ENCODE measurements at regions of chr1 and their contacts with region 1.

Region 1: GRCh38 chr1:45011837-45012638 is at the start of gene UROD:
- DNase-seq: peak; percentile 96
- H3K4me3 Mint-ChIP-seq: peak within 1 kb of the TSS; percentile 88
- H3K27ac Mint-ChIP-seq: peak within 1 kb of the TSS; percentile 85
- H3K4me1 Mint-ChIP-seq: peaks cover 20% of the 10 kb centered on the region
- H3K27me3 Mint-ChIP-seq: no peaks in the 10 kb centered on the region
- CTCF ChIP-seq: no peak
- total RNA-seq, gene UROD: 76.9 and 84.7 TPM in 2 replicates

Region 2: DNA sequence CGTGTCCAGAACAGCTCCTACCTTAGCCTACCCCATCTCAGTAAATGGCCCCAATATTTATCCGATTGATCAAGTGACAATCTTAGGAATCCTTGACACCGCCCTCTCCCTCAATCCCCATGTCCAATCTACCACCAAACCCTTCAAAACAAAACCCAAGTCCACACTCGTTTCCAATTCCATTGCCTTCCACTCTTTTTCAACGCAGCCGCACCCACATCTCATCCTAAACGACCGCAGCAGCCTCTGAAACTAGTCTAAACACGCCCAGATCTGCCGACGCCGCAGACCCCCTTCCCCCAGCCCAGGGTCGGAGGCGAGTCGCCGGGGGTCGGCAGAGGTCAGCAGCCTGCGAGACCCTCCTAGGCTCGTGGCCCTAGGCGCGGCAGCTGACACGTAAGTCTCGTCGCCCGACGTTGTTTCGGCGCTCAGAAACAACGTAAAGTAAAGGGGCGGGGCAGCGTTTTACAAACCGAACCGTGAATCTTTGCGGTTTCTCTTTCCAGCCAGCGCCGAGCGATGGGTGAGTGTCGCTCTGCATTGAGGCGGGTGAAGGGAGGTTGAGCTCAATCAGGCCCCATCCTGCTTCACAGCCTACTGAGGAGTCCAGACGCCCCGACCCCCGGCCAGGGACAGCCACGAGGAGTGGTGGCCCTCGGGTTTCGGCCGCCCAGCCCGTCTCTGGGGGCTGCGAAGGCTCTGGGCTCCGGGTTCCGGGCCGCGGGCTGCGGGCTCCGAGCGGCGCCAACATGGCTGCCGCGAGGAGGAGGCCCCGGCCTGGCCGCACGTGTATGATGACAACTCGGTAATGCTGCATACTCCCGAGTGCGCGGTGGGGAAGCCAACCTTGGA is 236.7 kb before region 1 on chr1 and contains the start of gene RPS8:
- CTCF ChIA-PET with region 1: interaction called, 3 read pairs
- POLR2A ChIA-PET with region 1: interaction called, 41 read pairs
- intact Hi-C with region 1: no loop called
- DNase-seq: peak; percentile 96
- H3K4me3 Mint-ChIP-seq: peak within 1 kb of the TSS; percentile 91
- H3K27ac Mint-ChIP-seq: peak within 1 kb of the TSS; percentile 99
- H3K4me1 Mint-ChIP-seq: peaks cover 25% of the 10 kb centered on the region
- H3K27me3 Mint-ChIP-seq: no peaks in the 10 kb centered on the region
- CTCF ChIP-seq: no peak
- total RNA-seq, gene RPS8: 2,454 and 2,713 TPM in 2 replicates

Region 3: GRCh38 chr1:44819608-44820327 is 192.3 kb before region 1 on chr1:
- CTCF ChIA-PET with region 1: interaction called, 3 read pairs
- POLR2A ChIA-PET with region 1: interaction called, 20 read pairs
- intact Hi-C with region 1: no loop called
- DNase-seq: peak; percentile 94
- H3K4me3 Mint-ChIP-seq: peak overlapping the region; percentile 74
- H3K27ac Mint-ChIP-seq: peak overlapping the region; percentile 99
- H3K4me1 Mint-ChIP-seq: peaks cover 37% of the 10 kb centered on the region
- H3K27me3 Mint-ChIP-seq: no peaks in the 10 kb centered on the region
- CTCF ChIP-seq: no peak

Region 4: GRCh38 chr1:44970317-44970716 is 41.7 kb before region 1 on chr1:
- CTCF ChIA-PET with region 1: no interaction called
- POLR2A ChIA-PET with region 1: no interaction called
- intact Hi-C with region 1: no loop called
- DNase-seq: no peak
- H3K4me3 Mint-ChIP-seq: no peak overlapping the region
- H3K27ac Mint-ChIP-seq: no peak overlapping the region
- H3K4me1 Mint-ChIP-seq: no peaks in the 10 kb centered on the region
- H3K27me3 Mint-ChIP-seq: no peaks in the 10 kb centered on the region
- CTCF ChIP-seq: no peak

Region 5: GRCh38 chr1:44985747-44986359 is 26.2 kb before region 1 on chr1:
- CTCF ChIA-PET with region 1: interaction called, 10 read pairs
- POLR2A ChIA-PET with region 1: interaction called, 56 read pairs
- intact Hi-C with region 1: no loop called
- DNase-seq: peak; percentile 8
- H3K4me3 Mint-ChIP-seq: peak overlapping the region; percentile 90
- H3K27ac Mint-ChIP-seq: peak overlapping the region; percentile 40
- H3K4me1 Mint-ChIP-seq: peaks cover 5% of the 10 kb centered on the region
- H3K27me3 Mint-ChIP-seq: no peaks in the 10 kb centered on the region
- CTCF ChIP-seq: no peak

Region 6: GRCh38 chr1:45339789-45340570 is 327.9 kb after region 1 on chr1 and contains the starts of genes MUTYH and TOE1:
- CTCF ChIA-PET with region 1: interaction called, 6 read pairs
- POLR2A ChIA-PET with region 1: interaction called, 55 read pairs
- intact Hi-C with region 1: no loop called
- DNase-seq: peak; percentile 89
- H3K4me3 Mint-ChIP-seq: peak within 1 kb of the TSS; percentile 93
- H3K27ac Mint-ChIP-seq: peak within 1 kb of the TSS; percentile 93
- H3K4me1 Mint-ChIP-seq: peaks cover 4% of the 10 kb centered on the region
- H3K27me3 Mint-ChIP-seq: no peaks in the 10 kb centered on the region
- CTCF ChIP-seq: no peak
- total RNA-seq, gene MUTYH: 31.2 and 31.3 TPM in 2 replicates
- total RNA-seq, gene TOE1: 11.1 and 13.3 TPM in 2 replicates

Region 7: GRCh38 chr1:45490626-45491486 is 478.8 kb after region 1 on chr1 and contains the start of gene TESK2:
- CTCF ChIA-PET with region 1: interaction called, 55 read pairs
- POLR2A ChIA-PET with region 1: interaction called, 47 read pairs
- intact Hi-C with region 1: loop called (anchors 1 kb)
- DNase-seq: peak; percentile 100
- H3K4me3 Mint-ChIP-seq: no peak within 1 kb of the TSS
- H3K27ac Mint-ChIP-seq: no peak within 1 kb of the TSS
- H3K4me1 Mint-ChIP-seq: peaks cover 5% of the 10 kb centered on the region
- H3K27me3 Mint-ChIP-seq: no peaks in the 10 kb centered on the region
- CTCF ChIP-seq: no peak
- total RNA-seq, gene TESK2: 0.71 and 1.4 TPM in 2 replicates

Region 8: GRCh38 chr1:45621501-45621836 is 609.4 kb after region 1 on chr1:
- CTCF ChIA-PET with region 1: no interaction called
- POLR2A ChIA-PET with region 1: no interaction called
- intact Hi-C with region 1: no loop called
- DNase-seq: no peak
- H3K4me3 Mint-ChIP-seq: no peak overlapping the region
- H3K27ac Mint-ChIP-seq: no peak overlapping the region
- H3K4me1 Mint-ChIP-seq: no peaks in the 10 kb centered on the region
- H3K27me3 Mint-ChIP-seq: no peaks in the 10 kb centered on the region
- CTCF ChIP-seq: no peak

Measured in MCF 10A (cell line).